K562 (cell line): ENCODE measurements at regions of chr2 and their contacts with region 1.

Region 1: GRCh38 chr2:224357098-224357901 is 44.6 kb downstream of the FAM124B start:
- DNase-seq: peak; percentile 51 to 57 (median 52)
- ATAC-seq: peak; percentile 88
- H3K4me3 ChIP-seq: no peak overlapping the region
- H3K27ac ChIP-seq: no peak overlapping the region
- H3K4me1 ChIP-seq: no peaks in the 10 kb centered on the region
- H3K27me3 ChIP-seq: peaks cover 0 to 16% of the 10 kb centered on the region in 2 experiments; a peak in 2 of 5 replicates
- CTCF ChIP-seq: peak; percentile 60 to 79 (median 64)
- EP300 ChIP-seq: no peak
- POLR2A ChIP-seq: no peak
- RAD21 ChIP-seq: peak; percentile 82 to 87

Region 2: GRCh38 chr2:223970343-223971128 is 386.8 kb before region 1 on chr2:
- CTCF ChIA-PET with region 1: no interaction called
- POLR2A ChIA-PET with region 1: no interaction called
- in situ Hi-C with region 1: no loop called
- intact Hi-C with region 1: loop called (anchors 10 kb)
- DNase-seq: peak in 3 of 4 experiments; percentile 14 to 58 (median 18)
- ATAC-seq: peak; percentile 80
- H3K4me3 ChIP-seq: no peak overlapping the region
- H3K27ac ChIP-seq: no peak overlapping the region
- H3K4me1 ChIP-seq: no peaks in the 10 kb centered on the region
- H3K27me3 ChIP-seq: no peaks in the 10 kb centered on the region
- CTCF ChIP-seq: peak; percentile 45 to 78 (median 70); a peak in 5 of 6 replicates
- EP300 ChIP-seq: no peak
- POLR2A ChIP-seq: no peak
- RAD21 ChIP-seq: peak; percentile 88 to 89

Region 3: DNA sequence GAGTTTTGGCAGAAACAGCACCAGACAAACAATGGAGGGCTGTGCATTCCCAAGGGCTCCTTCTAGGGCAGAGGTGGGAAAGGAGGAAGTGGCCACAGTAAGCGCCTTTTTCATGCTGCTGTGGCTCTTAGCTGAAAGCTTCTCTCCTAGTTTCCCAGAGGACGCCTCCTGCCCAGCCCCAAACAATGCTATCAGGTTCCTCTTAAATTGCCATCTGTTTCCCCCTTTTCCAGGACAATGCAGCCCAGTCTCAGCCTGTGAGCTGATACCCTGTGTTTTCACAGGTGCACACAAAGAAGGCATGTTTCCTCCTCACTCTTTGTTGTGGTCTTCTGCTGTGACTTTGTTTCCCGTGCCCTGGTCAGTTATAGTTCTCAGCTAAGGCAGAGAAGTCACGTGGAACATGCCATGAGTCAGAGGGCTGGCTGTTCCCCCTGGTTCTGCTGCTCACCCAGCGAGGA is 50.0 kb after region 1 on chr2:
- CTCF ChIA-PET with region 1: no interaction called
- POLR2A ChIA-PET with region 1: no interaction called
- in situ Hi-C with region 1: no loop called
- intact Hi-C with region 1: no loop called
- DNase-seq: no peak
- ATAC-seq: no peak
- H3K4me3 ChIP-seq: no peak overlapping the region
- H3K27ac ChIP-seq: no peak overlapping the region
- H3K4me1 ChIP-seq: peaks cover 0 to 4% of the 10 kb centered on the region in 2 experiments; a peak in 3 of 5 replicates
- H3K27me3 ChIP-seq: no peaks in the 10 kb centered on the region
- CTCF ChIP-seq: no peak
- EP300 ChIP-seq: no peak
- POLR2A ChIP-seq: no peak
- RAD21 ChIP-seq: no peak

Region 4: GRCh38 chr2:224417350-224418346 is 60.3 kb after region 1 on chr2:
- CTCF ChIA-PET with region 1: no interaction called
- POLR2A ChIA-PET with region 1: no interaction called
- in situ Hi-C with region 1: no loop called
- intact Hi-C with region 1: no loop called
- DNase-seq: no peak
- ATAC-seq: no peak
- H3K4me3 ChIP-seq: no peak overlapping the region
- H3K27ac ChIP-seq: no peak overlapping the region
- H3K4me1 ChIP-seq: no peaks in the 10 kb centered on the region
- H3K27me3 ChIP-seq: no peaks in the 10 kb centered on the region
- CTCF ChIP-seq: no peak
- EP300 ChIP-seq: no peak
- POLR2A ChIP-seq: no peak
- RAD21 ChIP-seq: no peak

Region 5: DNA sequence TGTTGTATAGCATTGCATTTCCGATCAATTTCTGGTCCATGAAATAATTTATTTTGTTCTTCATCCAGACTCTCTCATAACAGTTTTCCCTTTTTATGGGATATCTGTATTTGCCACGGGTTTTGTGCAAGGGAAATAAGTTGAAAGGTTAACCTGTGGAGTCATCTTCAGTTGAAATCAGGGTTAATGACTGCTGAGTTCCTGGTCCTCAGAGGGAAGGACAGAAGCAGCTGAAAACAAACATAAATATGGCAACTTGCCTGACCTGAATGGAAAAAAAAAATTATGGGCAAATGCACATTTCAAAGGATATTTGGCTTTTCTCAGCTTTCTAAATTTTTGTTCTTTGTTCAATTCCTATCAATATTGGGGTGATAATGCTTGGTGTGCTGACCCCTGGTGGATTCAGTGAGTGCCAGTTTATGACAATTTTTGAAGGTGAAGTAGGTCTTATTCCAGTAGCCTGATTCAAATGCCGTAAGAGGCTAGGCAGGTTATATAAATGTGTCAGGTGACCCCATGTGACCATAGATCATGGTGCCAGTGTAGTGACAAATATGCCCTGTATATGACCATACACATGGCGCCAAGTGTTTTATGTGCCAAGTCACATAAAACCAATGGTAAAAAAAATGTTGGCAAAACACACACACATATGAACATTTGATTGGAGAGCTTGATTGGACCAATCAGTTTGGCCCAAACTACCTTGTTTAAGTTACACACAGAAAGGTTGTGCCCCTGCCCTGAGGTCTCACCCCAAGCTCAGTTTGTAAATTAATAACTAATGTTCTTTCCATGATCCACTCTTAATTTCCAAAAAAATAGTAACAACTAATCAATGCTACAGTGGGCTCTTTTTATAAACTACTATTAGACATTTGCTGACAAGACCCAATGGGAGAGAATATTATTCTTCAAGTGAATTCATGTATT is 92.2 kb after region 1 on chr2:
- CTCF ChIA-PET with region 1: interaction called, 6 read pairs
- POLR2A ChIA-PET with region 1: no interaction called
- in situ Hi-C with region 1: loop called (anchors 10 kb)
- intact Hi-C with region 1: loop called (anchors 1 kb)
- DNase-seq: peak in 2 of 4 experiments; percentile 14 to 22
- ATAC-seq: peak; percentile 60
- H3K4me3 ChIP-seq: no peak overlapping the region
- H3K27ac ChIP-seq: no peak overlapping the region
- H3K4me1 ChIP-seq: no peaks in the 10 kb centered on the region
- H3K27me3 ChIP-seq: no peaks in the 10 kb centered on the region
- CTCF ChIP-seq: peak; percentile 29 to 56 (median 50); a peak in 5 of 6 replicates
- EP300 ChIP-seq: no peak
- POLR2A ChIP-seq: no peak
- RAD21 ChIP-seq: peak; percentile 19 to 57; a peak in 2 of 4 replicates

Region 6: GRCh38 chr2:224778474-224778877 is 421.2 kb after region 1 on chr2:
- CTCF ChIA-PET with region 1: interaction called, 4 read pairs
- POLR2A ChIA-PET with region 1: no interaction called
- in situ Hi-C with region 1: loop called (anchors 10 kb)
- intact Hi-C with region 1: loop called (anchors 2 kb)
- DNase-seq: peak; percentile 22 to 47 (median 26)
- ATAC-seq: peak; percentile 48; the same call in 1 of the 3 replicates
- H3K4me3 ChIP-seq: no peak overlapping the region
- H3K27ac ChIP-seq: no peak overlapping the region
- H3K4me1 ChIP-seq: no peaks in the 10 kb centered on the region
- H3K27me3 ChIP-seq: no peaks in the 10 kb centered on the region
- CTCF ChIP-seq: peak; percentile 35 to 68 (median 48); a peak in 4 of 6 replicates
- EP300 ChIP-seq: no peak
- POLR2A ChIP-seq: no peak
- RAD21 ChIP-seq: peak; percentile 33 to 66; a peak in 3 of 4 replicates

Region 7: DNA sequence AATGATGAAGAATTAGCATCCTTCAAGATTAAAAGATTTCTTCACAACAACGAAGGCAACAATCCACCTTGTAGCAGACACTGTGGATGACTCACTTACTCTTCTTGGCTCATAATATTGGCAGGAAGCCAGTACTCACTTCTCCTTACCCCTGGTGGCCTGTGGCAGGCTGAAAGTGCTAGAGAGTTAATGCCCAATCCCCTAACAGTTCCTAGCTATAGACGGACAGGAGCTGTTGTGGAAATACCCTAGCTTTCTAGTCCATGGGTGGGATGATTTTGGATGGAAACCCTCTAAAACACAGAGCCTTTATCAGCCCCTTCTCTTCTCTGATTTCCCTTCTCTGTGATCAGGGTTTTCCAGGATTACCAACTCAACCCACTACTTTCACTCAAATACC is 913.6 kb after region 1 on chr2:
- CTCF ChIA-PET with region 1: no interaction called
- POLR2A ChIA-PET with region 1: no interaction called
- in situ Hi-C with region 1: no loop called
- intact Hi-C with region 1: no loop called
- DNase-seq: peak in 3 of 4 experiments; percentile 9 to 46 (median 10)
- ATAC-seq: peak; percentile 70
- H3K4me3 ChIP-seq: no peak overlapping the region
- H3K27ac ChIP-seq: no peak overlapping the region
- H3K4me1 ChIP-seq: no peaks in the 10 kb centered on the region
- H3K27me3 ChIP-seq: no peaks in the 10 kb centered on the region
- CTCF ChIP-seq: no peak
- EP300 ChIP-seq: no peak
- POLR2A ChIP-seq: no peak
- RAD21 ChIP-seq: no peak

Region 8: GRCh38 chr2:225660262-225661131 is 1303.2 kb after region 1 on chr2:
- CTCF ChIA-PET with region 1: no interaction called
- POLR2A ChIA-PET with region 1: no interaction called
- in situ Hi-C with region 1: no loop called
- intact Hi-C with region 1: loop called (anchors 2 kb)
- DNase-seq: peak; percentile 51 to 75 (median 60)
- ATAC-seq: peak; percentile 91
- H3K4me3 ChIP-seq: no peak overlapping the region
- H3K27ac ChIP-seq: no peak overlapping the region
- H3K4me1 ChIP-seq: no peaks in the 10 kb centered on the region
- H3K27me3 ChIP-seq: no peaks in the 10 kb centered on the region
- CTCF ChIP-seq: peak; percentile 62 to 77 (median 64)
- EP300 ChIP-seq: no peak
- POLR2A ChIP-seq: no peak
- RAD21 ChIP-seq: peak; percentile 77 to 87